CD8-positive, alpha-beta memory T cell (primary cell): ENCODE measurements at regions of chr1 and their contacts with region 1.

Region 1: DNA sequence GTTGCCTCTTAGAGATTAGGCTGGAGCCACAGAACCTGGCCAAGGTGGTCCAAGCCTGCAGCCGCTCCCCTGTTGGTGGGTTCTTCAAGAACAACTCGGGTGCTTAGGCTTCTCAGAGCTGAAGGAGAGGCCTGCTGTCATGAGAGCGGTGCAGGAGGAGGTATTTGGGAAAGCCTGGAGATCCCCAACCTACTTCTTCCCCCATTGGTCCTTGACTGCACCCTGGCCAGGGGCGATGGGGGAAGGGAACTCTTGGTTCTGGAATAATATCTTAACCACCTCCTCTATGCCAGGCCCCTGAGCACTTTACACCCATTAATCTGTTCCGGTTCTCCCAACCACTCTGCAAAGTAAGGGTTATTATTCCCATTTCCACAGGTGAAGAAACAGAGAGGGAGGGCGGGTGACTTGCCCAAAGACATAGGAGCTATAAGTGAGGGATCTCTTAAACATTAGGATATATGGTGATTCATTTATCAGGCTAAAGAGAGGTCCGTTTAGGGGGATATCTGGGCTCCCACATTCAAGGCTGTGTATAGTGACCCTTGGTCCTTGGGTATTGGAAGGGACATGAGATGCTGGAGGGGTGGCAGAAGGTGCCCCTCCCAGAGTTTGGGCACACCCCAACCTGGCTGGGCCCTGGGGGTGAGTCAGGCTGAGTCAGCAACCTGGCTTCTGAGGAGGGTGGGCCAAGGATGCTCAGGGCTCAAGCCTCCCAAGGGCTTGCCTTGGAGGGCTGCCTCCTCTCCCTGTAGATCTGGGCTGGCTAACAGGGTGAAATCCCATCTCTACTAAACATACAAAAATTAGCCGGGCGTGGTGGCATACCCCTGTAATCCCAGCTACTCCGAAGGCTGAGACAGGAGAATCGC is 5.2 kb downstream of the TRNP1 start:
- DNase-seq: no peak
- H3K4me3 ChIP-seq: no peak overlapping the region
- H3K4me3 Mint-ChIP-seq: no peak overlapping the region
- H3K27ac ChIP-seq: no peak overlapping the region
- H3K27ac Mint-ChIP-seq: no peak overlapping the region
- H3K4me1 ChIP-seq: peaks cover 10% of the 10 kb centered on the region
- H3K4me1 Mint-ChIP-seq: peaks cover 7 to 15% (median 7%) of the 10 kb centered on the region in 3 donors
- H3K27me3 ChIP-seq: peaks cover 26% of the 10 kb centered on the region
- H3K27me3 Mint-ChIP-seq: peaks cover 35 to 40% of the 10 kb centered on the region in 2 donors

Region 2: DNA sequence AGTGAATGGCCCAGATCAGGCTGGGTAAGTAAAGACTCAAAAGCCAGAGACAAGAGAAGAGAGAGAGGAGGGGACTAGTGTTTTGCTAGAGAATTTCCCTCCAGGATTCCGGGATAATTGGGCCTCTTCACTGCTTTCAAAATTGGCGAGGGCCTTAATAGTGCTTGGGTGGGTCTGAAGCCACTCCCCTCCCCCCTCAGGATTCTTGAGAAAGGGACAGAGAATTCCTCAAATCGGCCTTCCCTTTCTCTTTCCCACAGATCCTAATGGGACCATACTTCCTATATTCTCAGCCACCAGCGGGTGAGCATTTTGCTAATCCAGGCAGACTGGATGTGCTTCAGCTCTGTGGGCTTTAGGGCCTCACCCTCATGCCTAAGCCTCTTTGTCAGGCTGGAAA is 123.8 kb before region 1 on chr1:
- CTCF ChIA-PET with region 1: no interaction called
- POLR2A ChIA-PET with region 1: no interaction called
- DNase-seq: no peak
- H3K4me3 ChIP-seq: no peak overlapping the region
- H3K4me3 Mint-ChIP-seq: no peak overlapping the region
- H3K27ac ChIP-seq: no peak overlapping the region
- H3K27ac Mint-ChIP-seq: peak overlapping the region in 1 of 8 donors; percentile 46
- H3K4me1 ChIP-seq: no peaks in the 10 kb centered on the region
- H3K4me1 Mint-ChIP-seq: no peaks in the 10 kb centered on the region
- H3K27me3 ChIP-seq: no peaks in the 10 kb centered on the region
- H3K27me3 Mint-ChIP-seq: no peaks in the 10 kb centered on the region

Region 3: DNA sequence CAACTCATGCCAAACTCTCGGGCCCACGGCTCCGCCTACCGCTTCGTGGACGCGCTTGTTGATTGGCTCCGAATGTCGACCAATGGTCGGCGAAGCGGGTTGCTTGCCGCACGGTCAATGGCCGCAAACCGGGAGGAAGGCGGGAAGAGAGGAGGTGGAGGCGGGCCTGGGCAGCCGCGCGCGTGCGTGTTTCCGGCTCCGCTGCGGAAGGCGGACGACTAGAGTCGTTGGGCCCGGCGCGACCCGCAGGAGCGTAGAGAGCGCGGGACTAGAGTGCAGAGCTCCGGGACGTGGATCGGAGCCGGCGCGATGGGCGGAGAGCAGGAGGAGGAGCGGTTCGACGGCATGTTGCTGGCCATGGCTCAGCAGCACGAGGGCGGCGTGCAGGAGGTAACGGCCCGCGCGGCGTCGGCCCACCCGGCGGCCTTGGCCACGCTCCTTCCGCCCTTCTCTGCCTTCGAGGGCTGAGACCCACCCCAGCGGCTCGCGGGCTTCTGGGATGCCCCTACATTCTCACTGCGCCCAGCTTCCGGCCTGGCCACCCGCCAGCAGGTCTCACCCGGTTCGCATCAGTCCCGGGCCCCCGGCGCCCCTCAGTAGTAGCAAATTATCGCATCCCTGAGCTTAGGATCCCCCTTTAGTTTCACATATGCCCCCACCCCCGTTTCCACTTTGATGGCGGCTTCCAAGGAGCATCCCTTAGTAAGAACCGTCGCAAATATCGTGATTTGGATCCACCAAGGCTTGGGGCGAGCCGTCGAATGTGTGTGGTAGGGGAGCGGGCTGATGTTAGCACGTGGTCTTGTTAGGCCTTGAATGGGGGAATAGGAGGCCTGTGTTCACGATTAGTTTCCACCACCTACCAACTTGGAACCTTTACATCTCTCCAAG is 76.9 kb before region 1 on chr1 and contains the start of gene NUDC:
- CTCF ChIA-PET with region 1: no interaction called
- POLR2A ChIA-PET with region 1: no interaction called
- DNase-seq: peak; percentile 93 to 97 (median 95)
- H3K4me3 ChIP-seq: peak within 1 kb of the TSS; percentile 77
- H3K4me3 Mint-ChIP-seq: peak within 1 kb of the TSS; percentile 87 to 97 (median 93)
- H3K27ac ChIP-seq: peak within 1 kb of the TSS; percentile 84
- H3K27ac Mint-ChIP-seq: peak within 1 kb of the TSS; percentile 87 to 98 (median 95)
- H3K4me1 ChIP-seq: peaks cover 22% of the 10 kb centered on the region
- H3K4me1 Mint-ChIP-seq: peaks cover 26 to 46% (median 40%) of the 10 kb centered on the region in 3 donors
- H3K27me3 ChIP-seq: no peaks in the 10 kb centered on the region
- H3K27me3 Mint-ChIP-seq: peaks cover 0 to 1% of the 10 kb centered on the region in 2 donors
- total RNA-seq, gene NUDC: 167 to 168 TPM

Region 4: GRCh38 chr1:26986658-26987057 is 12.0 kb before region 1 on chr1:
- CTCF ChIA-PET with region 1: interaction called, 21 read pairs
- POLR2A ChIA-PET with region 1: no interaction called
- DNase-seq: no peak
- H3K4me3 ChIP-seq: no peak overlapping the region
- H3K4me3 Mint-ChIP-seq: peak overlapping the region in 1 of 7 donors; percentile 21
- H3K27ac ChIP-seq: no peak overlapping the region
- H3K27ac Mint-ChIP-seq: no peak overlapping the region
- H3K4me1 ChIP-seq: no peaks in the 10 kb centered on the region
- H3K4me1 Mint-ChIP-seq: no peaks in the 10 kb centered on the region
- H3K27me3 ChIP-seq: peaks cover 6% of the 10 kb centered on the region
- H3K27me3 Mint-ChIP-seq: peaks cover 18 to 44% of the 10 kb centered on the region in 2 donors

Region 5: GRCh38 chr1:27010989-27011764 is 12.5 kb after region 1 on chr1:
- CTCF ChIA-PET with region 1: interaction called, 17 read pairs
- POLR2A ChIA-PET with region 1: interaction called, 9 read pairs
- DNase-seq: no peak
- H3K4me3 ChIP-seq: no peak overlapping the region
- H3K4me3 Mint-ChIP-seq: peak overlapping the region in 2 of 7 donors; percentile 39 to 53
- H3K27ac ChIP-seq: no peak overlapping the region
- H3K27ac Mint-ChIP-seq: no peak overlapping the region
- H3K4me1 ChIP-seq: no peaks in the 10 kb centered on the region
- H3K4me1 Mint-ChIP-seq: peaks cover 3 to 10% (median 6%) of the 10 kb centered on the region in 3 donors
- H3K27me3 ChIP-seq: peaks cover 14% of the 10 kb centered on the region
- H3K27me3 Mint-ChIP-seq: peaks cover 21 to 33% of the 10 kb centered on the region in 2 donors

Region 6: DNA sequence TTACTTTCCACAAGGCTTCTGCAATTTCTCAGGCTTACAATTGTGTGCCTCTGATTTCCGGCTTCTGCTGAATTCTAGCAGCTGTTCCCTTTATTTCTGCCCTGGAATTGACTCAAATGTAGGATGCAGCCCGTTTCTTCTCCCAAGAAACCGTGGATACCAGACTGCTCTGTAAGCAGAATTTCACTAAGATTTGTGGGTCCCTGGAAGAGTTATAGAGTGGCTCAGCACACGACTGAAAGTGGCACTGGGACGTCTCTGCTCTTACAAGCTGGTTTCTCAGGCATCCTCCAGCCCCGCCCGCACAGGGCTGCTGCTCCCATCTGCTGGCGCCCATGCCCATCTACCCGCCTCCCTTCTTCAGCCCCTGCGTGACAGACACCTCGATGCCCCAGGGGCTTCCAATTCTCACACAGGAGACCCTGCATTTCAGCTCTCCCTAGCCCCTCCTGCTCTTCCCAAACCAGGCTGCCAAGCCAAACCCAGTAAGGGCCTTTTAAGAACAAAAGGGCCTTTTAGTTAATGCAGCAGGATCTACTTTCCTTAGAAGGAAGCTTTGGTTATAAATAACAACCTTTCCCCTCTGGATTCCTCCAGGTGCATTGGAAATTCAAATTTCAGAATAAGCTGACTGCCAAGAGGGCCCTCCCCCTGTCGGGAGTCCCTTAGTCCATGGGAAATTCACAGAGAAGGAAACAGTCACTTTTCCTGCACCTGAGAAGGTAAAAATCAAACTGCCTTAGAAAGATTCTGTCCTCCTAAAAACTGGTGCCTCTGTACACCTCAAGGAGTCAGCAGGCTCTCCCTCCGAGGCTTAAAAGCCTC is 59.3 kb after region 1 on chr1:
- CTCF ChIA-PET with region 1: no interaction called
- POLR2A ChIA-PET with region 1: interaction called, 10 read pairs
- DNase-seq: no peak
- H3K4me3 ChIP-seq: no peak overlapping the region
- H3K4me3 Mint-ChIP-seq: no peak overlapping the region
- H3K27ac ChIP-seq: no peak overlapping the region
- H3K27ac Mint-ChIP-seq: peak overlapping the region in 1 of 8 donors; percentile 57
- H3K4me1 ChIP-seq: no peaks in the 10 kb centered on the region
- H3K4me1 Mint-ChIP-seq: no peaks in the 10 kb centered on the region
- H3K27me3 ChIP-seq: no peaks in the 10 kb centered on the region
- H3K27me3 Mint-ChIP-seq: peaks cover 0 to 6% of the 10 kb centered on the region in 2 donors